ENCODE measurements at regions of chr1 and their contacts with region 1.

Region 1: GRCh38 chr1:170657275-170657853 is 6.6 kb upstream of the PRRX1 start:
- DNase-seq: no peak
- H3K4me3 ChIP-seq: no peak overlapping the region
- H3K27ac ChIP-seq: no peak overlapping the region
- H3K4me1 ChIP-seq: no peaks in the 10 kb centered on the region
- H3K27me3 ChIP-seq: no peaks in the 10 kb centered on the region
- CTCF ChIP-seq: no peak

Region 2: DNA sequence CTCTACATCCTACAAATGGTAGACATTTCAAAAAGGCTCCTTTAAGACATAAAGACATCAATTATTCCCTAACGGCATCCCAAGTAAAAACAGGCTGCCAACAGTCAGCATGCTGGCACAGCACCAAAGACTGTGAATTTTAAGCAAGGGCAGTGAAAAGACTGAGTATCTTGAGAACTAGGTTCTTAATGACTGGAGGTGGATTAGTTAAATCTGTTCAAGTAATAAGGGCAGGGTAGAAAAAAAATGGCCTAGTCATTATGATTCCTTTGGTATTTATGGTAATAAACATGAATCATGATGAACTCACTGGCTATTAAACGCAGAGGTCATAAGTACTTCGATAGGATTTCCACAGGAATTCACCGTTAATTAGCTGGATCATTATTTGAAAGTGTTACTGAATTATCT is 658.0 kb before region 1 on chr1:
- intact Hi-C with region 1: loop called (anchors 10 kb)
- DNase-seq: no peak
- H3K4me3 ChIP-seq: no peak overlapping the region
- H3K27ac ChIP-seq: peak overlapping the region in 1 of 2 donors; percentile 10
- H3K4me1 ChIP-seq: no peaks in the 10 kb centered on the region
- H3K27me3 ChIP-seq: no peaks in the 10 kb centered on the region
- CTCF ChIP-seq: no peak

Region 3: GRCh38 chr1:170680428-170680827 is 23.1 kb after region 1 on chr1:
- intact Hi-C with region 1: no loop called
- DNase-seq: no peak
- H3K4me3 ChIP-seq: no peak overlapping the region
- H3K27ac ChIP-seq: no peak overlapping the region
- H3K4me1 ChIP-seq: peaks cover 0 to 13% of the 10 kb centered on the region in 2 donors
- H3K27me3 ChIP-seq: no peaks in the 10 kb centered on the region
- CTCF ChIP-seq: no peak

Region 4: GRCh38 chr1:170692866-170693575 is 35.7 kb after region 1 on chr1:
- intact Hi-C with region 1: no loop called
- DNase-seq: no peak
- H3K4me3 ChIP-seq: no peak overlapping the region
- H3K27ac ChIP-seq: peak overlapping the region; percentile 54 to 79
- H3K4me1 ChIP-seq: peaks cover 13 to 41% of the 10 kb centered on the region in 2 donors
- H3K27me3 ChIP-seq: no peaks in the 10 kb centered on the region
- CTCF ChIP-seq: no peak

Region 5: GRCh38 chr1:170978371-170978910 is 321.1 kb after region 1 on chr1:
- intact Hi-C with region 1: no loop called
- DNase-seq: no peak
- H3K4me3 ChIP-seq: no peak overlapping the region
- H3K27ac ChIP-seq: no peak overlapping the region
- H3K4me1 ChIP-seq: no peaks in the 10 kb centered on the region
- H3K27me3 ChIP-seq: no peaks in the 10 kb centered on the region
- CTCF ChIP-seq: no peak